Activated B cell treated with CpG ODN at 0.5 μM for 24 hours (primary cell): ENCODE measurements at regions of chr2 and their contacts with region 1.

Region 1: DNA sequence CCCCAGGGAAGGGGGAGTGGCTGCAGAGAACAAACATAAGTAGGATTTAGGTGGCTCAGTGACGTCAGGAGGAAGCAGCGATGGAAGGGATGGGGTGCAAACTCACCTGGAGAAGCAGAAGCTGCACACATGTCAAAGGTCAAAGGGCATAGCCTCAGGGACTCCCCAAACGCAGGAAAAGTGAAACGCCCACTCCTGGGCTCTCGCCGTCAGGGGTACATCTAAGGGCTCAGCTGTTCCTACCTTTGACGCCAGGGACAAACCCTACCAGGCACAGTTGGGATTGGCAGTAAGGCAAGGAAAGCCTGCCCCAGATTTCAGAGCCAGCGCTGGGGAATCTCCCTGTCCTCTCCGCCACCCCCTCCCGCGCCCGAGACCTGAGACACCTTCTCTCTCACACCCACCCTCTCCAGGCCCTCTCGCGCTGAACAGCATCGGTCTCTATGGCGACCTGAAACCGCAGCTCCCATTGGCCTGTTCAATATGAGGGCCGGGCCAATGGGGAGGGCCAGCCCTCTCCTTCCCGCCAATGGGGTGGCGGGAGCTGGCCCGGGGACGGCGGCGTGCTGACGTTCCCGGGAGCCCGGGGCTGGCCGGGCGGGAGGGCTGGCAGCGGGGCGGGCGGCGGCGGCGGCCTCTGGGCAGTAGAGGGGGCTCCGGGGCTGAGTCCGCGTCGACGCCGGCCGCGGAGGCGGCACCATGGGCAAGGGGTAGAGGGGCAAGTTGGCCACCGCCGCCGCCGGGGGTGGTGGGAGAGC is at the starts of genes CCDC148 and PKP4:
- DNase-seq: peak; percentile 76
- ATAC-seq: peak; percentile 96
- H3K4me3 Mint-ChIP-seq: peak within 1 kb of the TSS; percentile 92
- H3K27ac Mint-ChIP-seq: peak within 1 kb of the TSS; percentile 47
- H3K4me1 Mint-ChIP-seq: peaks cover 18% of the 10 kb centered on the region
- H3K27me3 Mint-ChIP-seq: peaks cover 18% of the 10 kb centered on the region
- CTCF ChIP-seq: no peak
- total RNA-seq, gene CCDC148: not detected in 2 replicates
- total RNA-seq, gene PKP4: 6.5 and 8.2 TPM in 2 replicates

Region 2: DNA sequence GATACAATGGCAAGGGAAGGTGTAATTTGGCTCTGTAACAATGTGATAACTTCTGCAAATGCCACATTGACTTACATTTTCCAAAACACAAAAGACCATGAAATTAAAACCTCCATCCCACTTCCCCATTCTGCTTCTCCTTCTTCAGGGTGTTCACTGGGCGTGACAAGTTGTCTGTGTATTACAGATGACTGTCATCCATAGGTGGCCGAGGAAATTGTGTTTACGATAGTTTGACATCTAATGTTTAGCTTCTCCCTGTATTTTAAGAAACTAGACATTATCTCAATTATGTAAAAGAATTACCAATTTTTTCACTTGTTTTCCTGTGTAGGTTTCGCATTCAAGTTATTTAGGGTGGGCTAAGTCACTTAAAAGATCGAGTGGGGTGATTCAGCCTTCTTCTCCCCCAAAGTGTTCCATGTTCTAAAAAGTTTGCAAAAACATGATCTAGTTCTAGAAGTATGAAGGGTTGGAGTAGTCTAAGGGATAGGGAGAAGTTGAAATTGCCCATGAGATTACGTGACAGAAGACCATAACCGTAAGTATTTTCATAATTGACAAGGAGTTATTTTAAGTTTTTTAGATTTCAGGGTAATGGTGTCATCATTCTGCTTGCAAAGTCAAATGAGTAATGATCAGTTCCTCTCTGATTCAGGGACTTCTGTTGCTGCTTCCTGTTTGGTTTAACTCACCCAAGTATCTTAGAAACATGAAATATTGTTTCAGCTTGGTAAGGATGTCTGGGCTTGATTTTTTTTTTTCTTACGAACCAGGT is 987.4 kb before region 1 on chr2:
- CTCF ChIA-PET with region 1: no interaction called
- POLR2A ChIA-PET with region 1: no interaction called
- intact Hi-C with region 1: loop called (anchors 5 kb)
- DNase-seq: no peak
- ATAC-seq: peak; percentile 81
- H3K4me3 Mint-ChIP-seq: peak overlapping the region; percentile 81
- H3K27ac Mint-ChIP-seq: peak overlapping the region; percentile 99
- H3K4me1 Mint-ChIP-seq: peaks cover 87% of the 10 kb centered on the region
- H3K27me3 Mint-ChIP-seq: no peaks in the 10 kb centered on the region
- CTCF ChIP-seq: no peak

Region 3: GRCh38 chr2:157628477-157629415 is 827.7 kb before region 1 on chr2 and contains the start of gene ACVR1C:
- CTCF ChIA-PET with region 1: no interaction called
- POLR2A ChIA-PET with region 1: no interaction called
- intact Hi-C with region 1: loop called (anchors 5 kb)
- DNase-seq: peak; percentile 55
- ATAC-seq: peak; percentile 87
- H3K4me3 Mint-ChIP-seq: peak within 1 kb of the TSS; percentile 82
- H3K27ac Mint-ChIP-seq: peak within 1 kb of the TSS; percentile 12
- H3K4me1 Mint-ChIP-seq: peaks cover 22% of the 10 kb centered on the region
- H3K27me3 Mint-ChIP-seq: peaks cover 12% of the 10 kb centered on the region
- CTCF ChIP-seq: no peak
- total RNA-seq, gene ACVR1C: 0.20 and 0.32 TPM in 2 replicates

Region 4: DNA sequence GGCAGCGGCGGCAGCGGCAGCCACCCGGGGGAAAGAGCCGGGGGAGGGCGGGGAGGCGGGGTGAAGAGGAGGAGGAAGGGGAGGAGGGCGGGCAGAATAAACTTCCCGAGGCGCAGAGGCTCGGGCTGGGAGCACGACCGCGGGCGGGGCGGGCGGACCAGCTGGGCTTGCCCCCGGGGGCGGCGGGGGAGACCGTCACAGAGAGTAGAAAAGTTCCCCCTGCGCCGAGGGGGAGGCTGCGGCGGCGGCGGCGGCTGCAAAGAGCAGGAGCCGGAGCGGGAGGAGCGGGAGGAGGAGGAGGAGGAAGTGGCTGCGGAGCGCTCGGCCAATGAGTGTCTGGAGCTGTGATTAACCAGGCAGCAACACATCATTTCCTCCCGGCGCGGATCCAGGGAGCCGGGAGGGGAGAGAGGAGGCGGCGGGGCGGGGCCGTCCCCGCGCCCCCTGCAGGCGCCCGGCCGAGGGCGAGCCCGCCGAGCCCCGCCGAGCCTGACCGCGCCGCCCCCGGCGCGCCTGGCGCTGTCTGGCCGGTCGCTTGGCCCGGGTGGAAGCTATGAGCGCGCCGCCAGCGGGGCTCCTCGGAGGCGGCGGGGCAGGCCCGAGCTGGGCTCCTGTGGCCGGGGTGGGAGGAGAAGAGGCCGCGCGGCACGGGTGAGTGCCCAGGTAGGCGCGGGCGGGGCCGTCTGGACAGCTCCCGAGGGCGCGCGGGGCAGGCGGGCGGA is 580.3 kb before region 1 on chr2 and contains the start of gene ACVR1:
- CTCF ChIA-PET with region 1: no interaction called
- POLR2A ChIA-PET with region 1: no interaction called
- intact Hi-C with region 1: loop called (anchors 1 kb)
- DNase-seq: peak; percentile 76
- ATAC-seq: peak; percentile 80
- H3K4me3 Mint-ChIP-seq: peak within 1 kb of the TSS; percentile 88
- H3K27ac Mint-ChIP-seq: peak within 1 kb of the TSS; percentile 76
- H3K4me1 Mint-ChIP-seq: peaks cover 21% of the 10 kb centered on the region
- H3K27me3 Mint-ChIP-seq: no peaks in the 10 kb centered on the region
- CTCF ChIP-seq: no peak
- total RNA-seq, gene ACVR1: 4.4 and 4.6 TPM in 2 replicates

Region 5: GRCh38 chr2:158191076-158191895 is 265.2 kb before region 1 on chr2:
- CTCF ChIA-PET with region 1: no interaction called
- POLR2A ChIA-PET with region 1: interaction called, 4 read pairs
- intact Hi-C with region 1: loop called (anchors 2 kb)
- DNase-seq: no peak
- ATAC-seq: peak; percentile 82
- H3K4me3 Mint-ChIP-seq: peak overlapping the region; percentile 80
- H3K27ac Mint-ChIP-seq: peak overlapping the region; percentile 94
- H3K4me1 Mint-ChIP-seq: peaks cover 31% of the 10 kb centered on the region
- H3K27me3 Mint-ChIP-seq: no peaks in the 10 kb centered on the region
- CTCF ChIP-seq: no peak

Region 6: DNA sequence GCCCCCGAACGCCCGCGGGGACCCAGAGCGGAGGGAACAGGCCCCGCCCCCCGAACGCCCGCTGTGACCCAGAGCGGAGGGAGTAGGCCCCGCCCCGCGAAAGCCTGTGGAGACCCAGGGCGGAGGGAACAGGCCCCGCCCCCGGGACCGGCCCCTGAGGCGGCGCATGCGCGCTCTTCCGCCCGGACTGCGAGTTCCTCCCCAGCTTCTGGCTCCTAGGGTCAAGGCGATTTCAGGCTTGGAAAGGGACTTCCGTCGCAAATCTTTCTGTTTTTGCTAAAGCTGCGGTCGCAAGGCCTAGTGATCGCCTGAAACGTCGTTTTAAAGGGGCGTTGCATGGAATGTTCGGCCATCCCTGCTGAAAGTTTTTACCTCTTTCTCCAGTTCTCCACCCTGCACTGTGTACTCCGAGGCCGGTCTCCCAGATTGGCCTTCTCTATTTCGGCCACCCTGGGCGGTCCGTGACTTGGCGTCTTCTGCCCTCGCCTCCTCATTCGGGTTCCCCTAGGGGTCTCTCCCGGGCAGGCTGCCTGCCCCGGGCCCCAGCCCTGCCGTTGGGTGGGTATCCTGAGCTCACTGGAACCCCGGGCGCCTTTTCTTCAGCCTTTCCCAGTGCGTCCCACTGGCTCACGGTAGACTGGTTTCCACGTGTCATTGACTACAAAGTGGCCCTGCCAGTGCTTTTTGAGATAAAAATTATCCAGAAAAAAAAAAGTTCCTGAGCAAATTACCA is 830.4 kb after region 1 on chr2:
- CTCF ChIA-PET with region 1: no interaction called
- POLR2A ChIA-PET with region 1: no interaction called
- intact Hi-C with region 1: loop called (anchors 5 kb)
- DNase-seq: peak; percentile 97
- ATAC-seq: peak; percentile 99
- H3K4me3 Mint-ChIP-seq: peak overlapping the region; percentile 93
- H3K27ac Mint-ChIP-seq: peak overlapping the region; percentile 84
- H3K4me1 Mint-ChIP-seq: peaks cover 41% of the 10 kb centered on the region
- H3K27me3 Mint-ChIP-seq: peaks cover 2% of the 10 kb centered on the region
- CTCF ChIP-seq: no peak

Region 7: GRCh38 chr2:159516241-159516766 is 1059.8 kb after region 1 on chr2:
- CTCF ChIA-PET with region 1: no interaction called
- POLR2A ChIA-PET with region 1: no interaction called
- intact Hi-C with region 1: loop called (anchors 10 kb)
- DNase-seq: no peak
- ATAC-seq: peak; percentile 89
- H3K4me3 Mint-ChIP-seq: peak overlapping the region; percentile 85
- H3K27ac Mint-ChIP-seq: peak overlapping the region; percentile 87
- H3K4me1 Mint-ChIP-seq: peaks cover 31% of the 10 kb centered on the region
- H3K27me3 Mint-ChIP-seq: no peaks in the 10 kb centered on the region
- CTCF ChIP-seq: no peak